Activated T-helper 2 cell treated with anti-CD3 and anti-CD28 coated beads, Interferon-gamma antibody, Interleukin-2, Interleukin-4, amounts not matched to agents 10 μg/mL and 5 μg/mL and 100 μg/mL, durations not matched to agents 14 hours and 24 hours and 36 hours (primary cell): ENCODE measurements at regions of chr14 and their contacts with region 1.

Region 1: DNA sequence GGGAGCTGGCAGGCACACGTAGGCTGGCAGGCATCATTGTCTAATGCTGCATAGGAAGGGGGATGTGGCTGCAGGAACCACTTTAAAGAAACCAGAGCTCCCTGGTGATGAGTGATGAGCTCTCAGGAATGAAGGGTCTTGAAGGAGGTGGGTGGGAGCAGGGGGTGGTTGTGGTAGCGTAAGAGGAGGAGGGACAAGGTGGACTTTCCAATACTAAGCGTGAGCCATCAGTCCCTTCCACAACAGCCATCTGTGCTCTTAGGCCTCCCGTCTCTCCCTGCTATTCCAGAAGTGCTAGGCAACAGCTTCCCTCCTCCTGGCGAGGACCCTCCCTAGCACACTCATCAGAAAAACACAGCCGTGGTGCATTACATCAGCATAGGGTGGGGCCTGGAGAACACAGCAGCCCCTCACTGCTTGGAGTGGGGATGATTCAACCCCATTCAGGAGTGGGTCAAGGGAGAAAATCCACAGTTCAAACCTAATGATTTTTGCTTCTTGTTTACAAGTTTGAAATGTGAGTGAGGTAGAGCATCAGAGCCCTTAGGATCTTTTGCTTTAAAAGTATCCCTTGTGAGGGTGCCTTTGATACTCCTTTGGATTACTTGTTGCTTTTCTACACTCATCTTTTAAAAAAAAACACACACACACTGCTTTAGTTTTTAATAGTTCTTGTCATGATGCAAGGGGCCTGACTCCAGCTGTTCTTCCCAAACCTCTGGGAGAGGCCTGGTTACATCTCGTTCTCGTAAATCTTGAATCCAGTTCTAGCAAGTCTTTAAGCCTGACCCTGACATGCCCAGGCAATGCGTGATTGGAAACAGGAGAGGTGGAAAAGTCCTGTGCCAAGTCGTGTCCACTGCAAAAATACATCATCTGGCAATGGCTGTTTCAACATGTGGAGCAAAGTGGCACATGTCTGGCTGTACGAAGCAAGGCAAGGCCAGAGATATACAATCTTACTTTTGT is 356.4 kb upstream of the DDHD1 start:
- DNase-seq: no peak
- H3K4me3 Mint-ChIP-seq: no peak overlapping the region
- H3K27ac Mint-ChIP-seq: no peak overlapping the region
- H3K4me1 Mint-ChIP-seq: peaks cover 21% of the 10 kb centered on the region
- H3K27me3 Mint-ChIP-seq: peaks cover 2% of the 10 kb centered on the region

Region 2: GRCh38 chr14:53462931-53463778 is 46.4 kb before region 1 on chr14:
- intact Hi-C with region 1: loop called (anchors 5 kb)
- DNase-seq: peak; percentile 19
- H3K4me3 Mint-ChIP-seq: peak overlapping the region; percentile 42
- H3K27ac Mint-ChIP-seq: peak overlapping the region; percentile 85
- H3K4me1 Mint-ChIP-seq: peaks cover 39% of the 10 kb centered on the region
- H3K27me3 Mint-ChIP-seq: no peaks in the 10 kb centered on the region

Region 3: DNA sequence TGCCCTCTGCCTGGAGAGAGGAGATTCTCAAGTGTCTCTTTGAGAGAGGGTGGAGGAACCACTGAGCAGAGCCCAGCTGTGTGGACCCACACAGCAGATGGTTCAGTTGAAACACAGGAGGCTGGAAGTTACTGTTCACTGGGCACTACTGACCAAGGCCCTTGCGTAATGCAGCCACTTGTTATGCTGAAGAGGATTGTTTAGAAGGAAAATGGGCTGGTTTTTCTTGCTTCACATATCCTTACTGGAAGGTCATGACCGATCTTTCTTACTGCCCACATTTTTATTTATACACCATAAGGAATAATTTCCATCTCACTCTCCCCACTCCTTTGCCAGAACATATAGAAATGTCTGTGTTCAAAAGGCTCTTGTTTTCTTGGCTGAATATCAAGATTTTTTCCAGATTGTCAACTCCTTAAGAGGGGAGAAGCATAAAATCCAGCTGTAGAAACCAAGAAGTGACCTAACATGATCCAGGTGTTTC is 18.7 kb after region 1 on chr14:
- intact Hi-C with region 1: no loop called
- DNase-seq: no peak
- H3K4me3 Mint-ChIP-seq: no peak overlapping the region
- H3K27ac Mint-ChIP-seq: no peak overlapping the region
- H3K4me1 Mint-ChIP-seq: peaks cover 8% of the 10 kb centered on the region
- H3K27me3 Mint-ChIP-seq: peaks cover 2% of the 10 kb centered on the region